Transverse colon (tissue), 4 donors: ENCODE measurements at regions of chr9 and their contacts with region 1.

Region 1: DNA sequence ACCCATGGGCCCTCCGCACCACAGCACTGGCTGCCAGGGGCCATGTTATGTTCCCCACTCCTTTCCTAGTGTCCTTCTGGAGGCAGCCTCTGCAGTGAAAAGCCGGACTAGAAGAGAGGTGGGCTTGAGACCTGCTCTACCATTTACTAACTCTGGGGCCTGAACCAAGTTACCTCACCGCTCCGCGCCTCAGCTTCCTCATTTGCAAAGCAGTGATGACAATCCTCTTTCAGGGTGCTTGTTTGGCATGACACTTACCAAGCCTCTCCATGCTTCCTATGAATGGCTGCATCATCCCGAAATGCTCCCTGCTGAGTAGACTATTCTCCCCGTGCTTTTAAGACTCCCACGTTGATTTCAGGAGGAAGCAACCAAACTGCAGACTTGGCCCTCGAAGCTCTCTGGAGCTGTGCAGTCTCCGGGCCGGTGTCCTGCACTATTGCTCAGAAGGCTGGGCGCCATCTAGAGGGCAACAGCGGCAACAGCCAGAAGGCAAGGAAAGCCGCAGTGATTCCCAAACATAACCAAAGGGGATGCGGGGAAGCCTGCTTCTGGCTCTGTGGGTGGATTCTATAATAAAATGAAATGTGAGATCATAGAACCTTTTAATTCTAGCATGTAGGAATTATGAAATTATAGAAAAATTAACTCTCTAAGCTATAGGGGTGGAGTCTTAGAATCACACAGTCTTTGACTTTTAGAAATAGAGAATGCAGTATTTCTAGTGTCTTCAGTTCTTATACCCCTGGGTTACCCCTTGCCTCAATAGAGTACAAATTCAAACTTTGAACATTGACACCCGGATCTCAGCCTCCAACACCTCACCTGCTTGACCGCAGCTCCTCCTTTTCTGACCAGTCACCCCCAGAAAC is 599.8 kb upstream of the BRINP1 start:
- DNase-seq: peak; percentile 63
- H3K4me3 ChIP-seq: no peak overlapping the region
- H3K27ac ChIP-seq: no peak overlapping the region
- H3K4me1 ChIP-seq: peaks cover 0 to 1% (median 0%) of the 10 kb centered on the region in 4 donors
- H3K27me3 ChIP-seq: peaks cover 7% of the 10 kb centered on the region
- CTCF ChIP-seq: peak; percentile 59 to 91 (median 88)
- EP300 ChIP-seq: no peak
- POLR2A ChIP-seq: no peak

Region 2: GRCh38 chr9:118670011-118670953 is 1298.8 kb before region 1 on chr9:
- in situ Hi-C with region 1: no loop called
- intact Hi-C with region 1: no loop called
- DNase-seq: no peak
- H3K4me3 ChIP-seq: no peak overlapping the region
- H3K27ac ChIP-seq: no peak overlapping the region
- H3K4me1 ChIP-seq: no peaks in the 10 kb centered on the region
- H3K27me3 ChIP-seq: no peaks in the 10 kb centered on the region
- CTCF ChIP-seq: no peak
- EP300 ChIP-seq: no peak
- POLR2A ChIP-seq: no peak

Region 3: GRCh38 chr9:119556129-119556875 is 412.8 kb before region 1 on chr9:
- in situ Hi-C with region 1: loop called in 1 of 4 experiments (anchors 25 kb)
- intact Hi-C with region 1: no loop called
- DNase-seq: peak; percentile 81
- H3K4me3 ChIP-seq: peak overlapping the region in 3 of 4 donors; percentile 15 to 33 (median 19)
- H3K27ac ChIP-seq: peak overlapping the region in 1 of 4 donors; percentile 8
- H3K4me1 ChIP-seq: peaks cover 0 to 9% (median 2%) of the 10 kb centered on the region in 4 donors
- H3K27me3 ChIP-seq: no peaks in the 10 kb centered on the region
- CTCF ChIP-seq: peak; percentile 77 to 90 (median 85)
- EP300 ChIP-seq: no peak
- POLR2A ChIP-seq: no peak

Region 4: GRCh38 chr9:119788921-119789320 is 180.2 kb before region 1 on chr9:
- in situ Hi-C with region 1: no loop called
- intact Hi-C with region 1: no loop called
- DNase-seq: no peak
- H3K4me3 ChIP-seq: no peak overlapping the region
- H3K27ac ChIP-seq: no peak overlapping the region
- H3K4me1 ChIP-seq: no peaks in the 10 kb centered on the region
- H3K27me3 ChIP-seq: no peaks in the 10 kb centered on the region
- CTCF ChIP-seq: no peak
- EP300 ChIP-seq: no peak
- POLR2A ChIP-seq: no peak

Region 5: GRCh38 chr9:120032639-120033038 is 63.6 kb after region 1 on chr9:
- in situ Hi-C with region 1: no loop called
- intact Hi-C with region 1: no loop called
- DNase-seq: no peak
- H3K4me3 ChIP-seq: no peak overlapping the region
- H3K27ac ChIP-seq: no peak overlapping the region
- H3K4me1 ChIP-seq: no peaks in the 10 kb centered on the region
- H3K27me3 ChIP-seq: no peaks in the 10 kb centered on the region
- CTCF ChIP-seq: no peak
- EP300 ChIP-seq: no peak
- POLR2A ChIP-seq: no peak

Region 6: GRCh38 chr9:120477521-120478001 is 508.5 kb after region 1 on chr9:
- in situ Hi-C with region 1: loop called in 1 of 4 experiments (anchors 25 kb)
- intact Hi-C with region 1: no loop called
- DNase-seq: peak; percentile 53
- H3K4me3 ChIP-seq: no peak overlapping the region
- H3K27ac ChIP-seq: peak overlapping the region in 2 of 4 donors; percentile 1 to 53
- H3K4me1 ChIP-seq: peaks cover 0 to 13% (median 9%) of the 10 kb centered on the region in 4 donors
- H3K27me3 ChIP-seq: no peaks in the 10 kb centered on the region
- CTCF ChIP-seq: peak; percentile 79 to 89 (median 82)
- EP300 ChIP-seq: no peak
- POLR2A ChIP-seq: no peak